Caco-2 (cell line): ENCODE measurements at regions of chr5 and their contacts with region 1.

Region 1: DNA sequence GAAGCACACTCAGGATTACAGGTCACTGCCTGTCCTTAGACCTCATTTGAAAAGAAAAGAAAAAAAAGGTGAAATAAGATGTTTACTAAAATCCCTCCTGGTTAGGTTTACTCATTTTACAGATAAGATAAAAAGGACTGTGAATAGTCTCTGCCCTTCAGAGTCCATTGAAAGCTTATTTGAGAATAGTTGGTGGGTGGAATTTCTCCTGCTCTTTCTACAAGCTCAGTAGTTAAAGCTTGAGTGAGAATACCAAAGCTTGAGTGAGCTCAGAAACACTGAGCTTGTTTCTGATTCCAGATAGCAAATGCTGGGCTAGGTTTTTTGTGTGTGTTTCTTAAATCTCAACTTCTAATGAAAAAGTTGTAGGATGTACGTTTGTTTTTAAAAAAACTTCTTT is 106.7 kb downstream of the SLF1 start:
- DNase-seq: peak in 1 of 2 experiments; percentile 12
- H3K4me3 ChIP-seq: no peak overlapping the region
- H3K4me3 Mint-ChIP-seq: peak overlapping the region; percentile 66
- H3K27ac Mint-ChIP-seq: peak overlapping the region; percentile 73
- H3K4me1 ChIP-seq: peaks cover 19% of the 10 kb centered on the region
- H3K4me1 Mint-ChIP-seq: peaks cover 14% of the 10 kb centered on the region
- H3K27me3 ChIP-seq: no peaks in the 10 kb centered on the region
- H3K27me3 Mint-ChIP-seq: no peaks in the 10 kb centered on the region
- CTCF ChIP-seq: no peak

Region 2: DNA sequence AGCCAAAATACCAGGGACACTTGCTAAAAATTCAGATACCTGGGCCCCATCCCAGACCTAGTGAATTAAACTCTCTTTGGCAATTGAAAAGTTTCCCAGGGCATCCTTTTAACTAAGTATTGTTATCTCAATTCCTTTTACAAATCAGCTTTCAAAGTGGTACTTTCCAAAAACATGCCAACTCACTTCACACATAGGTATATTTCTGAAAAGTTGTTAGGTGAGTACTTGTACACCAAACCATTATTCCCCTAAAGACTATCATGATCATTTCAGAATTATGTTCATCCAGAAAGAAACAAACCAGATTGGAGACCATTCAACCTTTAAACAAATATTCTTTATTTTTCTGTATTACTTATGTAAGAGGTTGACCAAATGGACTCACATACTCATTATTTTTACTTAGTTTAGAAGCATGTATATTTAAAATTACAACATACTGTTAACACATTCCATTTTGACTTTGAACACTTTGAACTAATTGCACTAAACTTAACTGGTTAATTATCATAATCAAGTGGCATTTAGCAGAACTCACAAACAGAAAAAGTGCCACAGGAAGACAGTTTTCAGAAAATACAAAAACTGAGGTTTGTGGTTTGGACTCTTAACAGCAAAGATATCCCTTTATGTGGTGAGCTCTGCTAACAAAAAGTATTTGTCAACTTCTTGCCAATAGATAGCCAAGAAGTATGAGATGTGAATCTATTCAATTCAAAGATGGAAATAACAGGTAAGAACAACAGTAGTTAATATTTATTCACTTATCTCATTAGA is 147.5 kb before region 1 on chr5:
- CTCF ChIA-PET with region 1: no interaction called
- POLR2A ChIA-PET with region 1: no interaction called
- intact Hi-C with region 1: no loop called
- DNase-seq: no peak
- H3K4me3 ChIP-seq: no peak overlapping the region
- H3K4me3 Mint-ChIP-seq: no peak overlapping the region
- H3K27ac Mint-ChIP-seq: no peak overlapping the region
- H3K4me1 ChIP-seq: no peaks in the 10 kb centered on the region
- H3K4me1 Mint-ChIP-seq: no peaks in the 10 kb centered on the region
- H3K27me3 ChIP-seq: no peaks in the 10 kb centered on the region
- H3K27me3 Mint-ChIP-seq: no peaks in the 10 kb centered on the region
- CTCF ChIP-seq: no peak

Region 3: DNA sequence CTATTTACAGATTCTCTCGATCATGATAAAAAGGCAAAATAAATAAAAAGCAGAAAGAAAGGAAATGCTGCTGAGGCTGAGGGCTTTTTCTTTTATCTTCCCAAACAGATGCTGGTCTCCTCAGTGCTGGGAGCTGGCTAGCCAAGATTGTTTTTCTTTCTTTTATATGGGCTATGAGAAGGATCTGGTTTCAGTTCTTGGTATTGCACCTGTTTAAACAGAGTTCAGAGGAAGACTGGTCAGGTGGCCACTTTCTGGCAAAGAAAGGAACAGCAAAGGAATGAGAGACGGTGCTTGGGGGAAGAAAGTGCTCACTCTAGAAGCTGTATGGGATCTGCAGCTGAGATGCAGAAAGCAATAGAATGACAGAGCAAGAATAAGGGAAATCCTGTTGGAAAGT is 17.8 kb before region 1 on chr5:
- CTCF ChIA-PET with region 1: no interaction called
- POLR2A ChIA-PET with region 1: no interaction called
- intact Hi-C with region 1: loop called (anchors 2 kb)
- DNase-seq: peak in 1 of 2 experiments; percentile 33
- H3K4me3 ChIP-seq: no peak overlapping the region
- H3K4me3 Mint-ChIP-seq: peak overlapping the region; percentile 4
- H3K27ac Mint-ChIP-seq: no peak overlapping the region
- H3K4me1 ChIP-seq: peaks cover 4% of the 10 kb centered on the region; the same call in 1 of the 2 replicates
- H3K4me1 Mint-ChIP-seq: peaks cover 9% of the 10 kb centered on the region
- H3K27me3 ChIP-seq: no peaks in the 10 kb centered on the region
- H3K27me3 Mint-ChIP-seq: no peaks in the 10 kb centered on the region
- CTCF ChIP-seq: no peak